Activated naive CD4-positive, alpha-beta T cell treated with anti-CD3 and anti-CD28 coated beads, Interleukin-2, amount 10 ng/mL, durations not matched to agents 7 days and 5 days (primary cell): ENCODE measurements at regions of chr5 and their contacts with region 1.

Region 1: DNA sequence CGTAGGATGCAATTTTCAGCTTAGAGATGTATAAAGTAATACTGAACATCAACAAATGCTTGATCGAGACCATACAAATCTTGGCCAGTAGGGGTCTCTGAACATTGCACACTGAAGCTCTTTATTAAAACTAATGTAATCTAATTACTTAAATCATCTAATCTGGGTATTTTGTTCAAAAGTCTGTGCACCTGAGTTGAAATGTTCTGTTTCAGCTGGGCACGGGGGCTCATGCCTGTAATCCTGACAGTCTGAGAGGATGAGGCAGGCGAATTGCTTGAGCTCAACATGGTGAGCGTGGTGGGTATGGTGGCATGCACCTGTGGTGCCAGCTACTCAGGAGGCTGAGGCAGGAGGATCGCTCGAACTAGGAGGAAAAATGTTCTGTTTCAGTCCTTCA is 41.0 kb downstream of the ESM1 start:
- DNase-seq: peak; percentile 56
- H3K4me3 Mint-ChIP-seq: no peak overlapping the region
- H3K27ac Mint-ChIP-seq: no peak overlapping the region
- H3K4me1 Mint-ChIP-seq: peaks cover 18% of the 10 kb centered on the region
- H3K27me3 Mint-ChIP-seq: peaks cover 13% of the 10 kb centered on the region

Region 2: DNA sequence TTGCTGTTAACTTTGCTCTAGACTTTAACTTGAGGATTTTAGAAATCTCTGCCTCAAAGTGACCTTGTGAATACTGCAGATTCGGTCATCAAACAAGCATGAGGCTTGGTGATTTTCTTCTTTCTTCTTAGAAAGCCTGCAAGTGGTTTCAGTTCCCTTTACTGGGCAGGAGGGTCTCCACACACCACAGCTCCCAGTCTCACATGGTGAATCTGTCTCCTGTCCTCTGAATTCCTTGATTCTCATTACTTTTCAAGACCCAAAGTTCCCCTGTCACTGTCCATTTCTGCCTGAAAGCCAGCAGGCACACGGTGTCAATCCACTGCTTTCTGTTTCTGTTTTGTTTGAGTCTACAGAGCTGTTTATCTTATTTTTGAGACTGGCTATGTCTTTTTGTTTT is 474.7 kb before region 1 on chr5:
- CTCF ChIA-PET with region 1: no interaction called
- DNase-seq: no peak
- H3K4me3 Mint-ChIP-seq: peak overlapping the region; percentile 1
- H3K27ac Mint-ChIP-seq: no peak overlapping the region
- H3K4me1 Mint-ChIP-seq: peaks cover 5% of the 10 kb centered on the region
- H3K27me3 Mint-ChIP-seq: peaks cover 6% of the 10 kb centered on the region

Region 3: DNA sequence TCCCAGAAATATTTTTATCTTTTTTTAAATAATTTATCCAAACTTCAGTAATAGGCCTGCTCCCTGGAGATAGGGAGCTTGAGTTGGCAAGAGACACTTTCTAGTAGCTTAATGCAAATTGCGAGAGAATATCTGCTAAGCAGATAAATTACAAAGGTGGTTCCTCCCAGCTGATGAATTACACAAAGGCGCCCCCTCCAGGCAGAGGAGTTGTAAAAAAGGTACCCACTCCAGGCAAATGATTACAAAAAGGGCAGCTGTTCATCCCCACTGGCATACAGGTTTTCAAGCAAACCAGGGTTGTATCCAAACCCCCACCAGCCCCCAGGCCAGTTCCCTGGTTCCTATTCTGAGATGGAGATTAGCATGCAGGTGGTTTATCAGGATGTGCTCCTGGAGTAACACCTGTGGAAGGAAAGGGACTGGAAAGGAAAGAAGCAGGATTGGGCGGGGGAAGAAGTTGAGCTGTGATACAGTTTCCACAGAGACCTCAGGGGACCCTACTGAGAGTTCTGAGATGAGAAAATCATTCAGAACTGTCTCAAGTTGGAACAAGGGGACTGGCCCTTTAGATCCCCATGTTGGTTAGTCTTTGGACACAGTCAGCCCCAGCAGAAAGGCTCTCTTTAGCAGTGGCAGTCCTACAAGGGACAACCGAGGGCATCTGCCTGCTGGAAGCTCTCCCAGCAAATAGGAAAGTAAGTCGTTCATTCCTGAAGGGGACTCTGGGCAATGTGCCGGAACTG is 15.5 kb after region 1 on chr5:
- CTCF ChIA-PET with region 1: interaction called, 36 read pairs
- DNase-seq: peak; percentile 44
- H3K4me3 Mint-ChIP-seq: no peak overlapping the region
- H3K27ac Mint-ChIP-seq: no peak overlapping the region
- H3K4me1 Mint-ChIP-seq: peaks cover 11% of the 10 kb centered on the region
- H3K27me3 Mint-ChIP-seq: peaks cover 42% of the 10 kb centered on the region

Region 4: DNA sequence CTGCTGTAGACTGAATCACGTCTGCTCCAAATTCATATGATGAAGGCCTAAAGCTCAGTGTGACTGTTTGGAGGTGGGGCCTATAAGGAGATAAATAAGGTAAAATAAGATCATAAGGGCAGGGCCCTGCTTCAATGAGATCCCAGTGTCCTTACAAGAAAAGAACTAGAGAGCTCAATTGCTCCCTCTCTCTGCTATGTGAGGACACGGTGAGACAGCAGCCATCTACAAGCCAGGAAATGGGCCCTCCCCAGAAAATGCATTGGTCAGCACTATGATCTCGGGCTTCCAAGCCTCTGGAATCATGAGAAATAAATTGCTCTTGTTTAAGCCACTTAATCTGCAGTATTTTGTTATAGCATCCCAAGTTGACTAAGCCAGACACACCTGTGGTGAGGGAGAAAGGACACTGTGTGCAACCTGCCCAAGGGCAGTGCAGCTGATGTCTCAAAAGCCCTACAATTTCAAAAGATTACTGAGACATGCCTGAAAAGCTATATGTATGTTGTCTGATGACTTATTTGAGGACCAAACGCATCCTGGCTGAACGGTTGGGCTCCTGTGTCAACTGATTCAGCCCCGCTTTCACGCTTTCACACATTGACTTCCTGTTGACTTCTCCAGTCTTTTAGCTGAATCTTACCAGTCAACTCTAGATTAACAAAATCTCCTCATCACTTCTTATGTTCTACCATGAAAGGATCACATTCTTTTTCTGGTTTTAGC is 92.8 kb after region 1 on chr5:
- CTCF ChIA-PET with region 1: interaction called, 30 read pairs
- DNase-seq: peak; percentile 82
- H3K4me3 Mint-ChIP-seq: no peak overlapping the region
- H3K27ac Mint-ChIP-seq: peak overlapping the region; percentile 99
- H3K4me1 Mint-ChIP-seq: peaks cover 46% of the 10 kb centered on the region
- H3K27me3 Mint-ChIP-seq: no peaks in the 10 kb centered on the region

Region 5: GRCh38 chr5:55146543-55147151 is 202.3 kb after region 1 on chr5:
- CTCF ChIA-PET with region 1: interaction called, 100 read pairs
- DNase-seq: peak; percentile 91
- H3K4me3 Mint-ChIP-seq: no peak overlapping the region
- H3K27ac Mint-ChIP-seq: no peak overlapping the region
- H3K4me1 Mint-ChIP-seq: peaks cover 35% of the 10 kb centered on the region
- H3K27me3 Mint-ChIP-seq: peaks cover 50% of the 10 kb centered on the region